Activated CD4-positive, alpha-beta T cell treated with anti-CD3 and anti-CD28 coated beads, Interleukin-2, amount 10 ng/mL, durations not matched to agents 24 days and 14 days (primary cell): ENCODE measurements at regions of chr4 and their contacts with region 1.

Region 1: DNA sequence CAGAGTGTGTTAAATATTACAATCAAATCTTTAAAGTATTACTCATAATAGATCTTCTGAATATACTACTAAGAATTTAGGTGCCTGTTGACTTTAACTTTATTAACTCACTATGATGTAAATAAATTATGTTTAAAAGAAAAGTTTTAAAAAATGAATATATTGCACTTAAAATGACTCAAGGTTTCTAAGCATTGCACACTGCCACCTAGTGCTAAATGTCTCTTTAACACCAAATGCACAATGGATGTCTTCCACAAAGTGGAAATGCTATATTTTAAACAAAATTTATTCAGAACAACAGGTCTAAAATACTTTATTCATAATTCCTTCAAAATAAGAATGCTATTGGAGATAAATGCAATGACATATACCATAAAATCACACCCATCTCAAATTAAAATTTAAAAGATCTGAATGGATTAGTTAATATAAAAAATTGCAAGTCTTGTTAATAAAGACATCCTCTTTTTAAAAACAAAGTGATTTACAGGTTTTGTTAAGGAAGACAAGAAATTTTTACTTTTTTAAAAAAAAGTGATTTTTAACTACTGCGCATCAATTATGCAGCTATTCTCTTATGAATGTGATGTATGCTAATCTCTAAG is 5.5 kb downstream of the INPP4B start:
- DNase-seq: peak; percentile 71
- H3K4me3 Mint-ChIP-seq: no peak overlapping the region
- H3K27ac Mint-ChIP-seq: no peak overlapping the region
- H3K4me1 Mint-ChIP-seq: peaks cover 18% of the 10 kb centered on the region
- H3K27me3 Mint-ChIP-seq: peaks cover 8% of the 10 kb centered on the region

Region 2: GRCh38 chr4:142801966-142802365 is 38.7 kb before region 1 on chr4:
- intact Hi-C with region 1: loop called (anchors 5 kb)
- DNase-seq: peak; percentile 67
- H3K4me3 Mint-ChIP-seq: no peak overlapping the region
- H3K27ac Mint-ChIP-seq: no peak overlapping the region
- H3K4me1 Mint-ChIP-seq: peaks cover 14% of the 10 kb centered on the region
- H3K27me3 Mint-ChIP-seq: no peaks in the 10 kb centered on the region

Region 3: GRCh38 chr4:142861351-142861750 is 20.7 kb after region 1 on chr4:
- intact Hi-C with region 1: no loop called
- DNase-seq: no peak
- H3K4me3 Mint-ChIP-seq: no peak overlapping the region
- H3K27ac Mint-ChIP-seq: no peak overlapping the region
- H3K4me1 Mint-ChIP-seq: no peaks in the 10 kb centered on the region
- H3K27me3 Mint-ChIP-seq: peaks cover 5% of the 10 kb centered on the region

Region 4: DNA sequence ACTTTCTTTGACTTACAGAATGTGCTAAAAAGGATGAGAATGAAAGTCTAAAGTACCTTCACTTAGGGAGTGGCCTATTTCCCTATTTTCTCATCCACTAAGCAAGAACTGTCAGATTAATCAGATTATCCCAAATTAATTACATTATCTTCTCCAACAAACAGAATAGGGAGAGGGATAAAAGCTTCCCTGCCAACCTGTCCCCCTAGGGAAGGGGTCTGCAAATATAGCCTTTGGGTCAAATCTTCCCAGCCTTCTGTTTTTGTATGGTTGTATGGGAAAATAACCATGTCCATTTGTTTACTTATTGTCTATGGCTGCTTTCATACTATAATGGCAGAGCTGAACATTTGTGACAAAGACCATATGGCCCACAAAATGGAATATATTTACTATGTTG is 287.0 kb after region 1 on chr4:
- intact Hi-C with region 1: no loop called
- DNase-seq: no peak
- H3K4me3 Mint-ChIP-seq: no peak overlapping the region
- H3K27ac Mint-ChIP-seq: no peak overlapping the region
- H3K4me1 Mint-ChIP-seq: no peaks in the 10 kb centered on the region
- H3K27me3 Mint-ChIP-seq: peaks cover 2% of the 10 kb centered on the region